Naive thymus-derived CD4-positive, alpha-beta T cell (primary cell): ENCODE measurements at regions of chr20 and their contacts with region 1.

Region 1: DNA sequence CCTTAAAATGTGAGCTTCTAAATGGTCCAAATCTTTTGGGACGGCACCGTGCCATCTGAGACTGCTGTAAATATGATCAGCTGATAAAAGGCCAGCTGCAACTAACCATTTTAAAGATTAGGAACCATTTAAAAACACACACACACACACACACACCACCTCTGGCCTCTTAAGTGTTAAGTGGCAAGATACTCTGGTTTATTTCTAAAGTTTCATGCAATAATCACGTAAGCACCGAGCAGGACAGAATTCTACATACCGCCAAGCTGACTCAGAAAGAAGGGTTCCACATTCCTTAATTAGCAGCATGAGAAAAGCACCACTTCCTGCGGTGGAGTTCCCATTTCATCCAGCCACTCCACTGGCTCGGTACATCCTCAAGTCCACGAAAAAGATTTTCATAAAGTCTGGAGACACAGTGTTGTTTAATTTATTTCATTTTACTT is 17.8 kb upstream of the ZNF217 start:
- DNase-seq: peak in 1 of 9 donors; percentile 15
- ATAC-seq: no peak
- H3K4me3 ChIP-seq: no peak overlapping the region
- H3K4me3 Mint-ChIP-seq: no peak overlapping the region
- H3K27ac ChIP-seq: peak overlapping the region; percentile 35
- H3K27ac Mint-ChIP-seq: peak overlapping the region in 8 of 9 donors; percentile 48 to 81 (median 76)
- H3K4me1 ChIP-seq: peaks cover 12 to 22% of the 10 kb centered on the region in 2 donors
- H3K4me1 Mint-ChIP-seq: peaks cover 10 to 46% (median 37%) of the 10 kb centered on the region in 7 donors
- H3K27me3 ChIP-seq: no peaks in the 10 kb centered on the region
- H3K27me3 Mint-ChIP-seq: no peaks in the 10 kb centered on the region

Region 2: DNA sequence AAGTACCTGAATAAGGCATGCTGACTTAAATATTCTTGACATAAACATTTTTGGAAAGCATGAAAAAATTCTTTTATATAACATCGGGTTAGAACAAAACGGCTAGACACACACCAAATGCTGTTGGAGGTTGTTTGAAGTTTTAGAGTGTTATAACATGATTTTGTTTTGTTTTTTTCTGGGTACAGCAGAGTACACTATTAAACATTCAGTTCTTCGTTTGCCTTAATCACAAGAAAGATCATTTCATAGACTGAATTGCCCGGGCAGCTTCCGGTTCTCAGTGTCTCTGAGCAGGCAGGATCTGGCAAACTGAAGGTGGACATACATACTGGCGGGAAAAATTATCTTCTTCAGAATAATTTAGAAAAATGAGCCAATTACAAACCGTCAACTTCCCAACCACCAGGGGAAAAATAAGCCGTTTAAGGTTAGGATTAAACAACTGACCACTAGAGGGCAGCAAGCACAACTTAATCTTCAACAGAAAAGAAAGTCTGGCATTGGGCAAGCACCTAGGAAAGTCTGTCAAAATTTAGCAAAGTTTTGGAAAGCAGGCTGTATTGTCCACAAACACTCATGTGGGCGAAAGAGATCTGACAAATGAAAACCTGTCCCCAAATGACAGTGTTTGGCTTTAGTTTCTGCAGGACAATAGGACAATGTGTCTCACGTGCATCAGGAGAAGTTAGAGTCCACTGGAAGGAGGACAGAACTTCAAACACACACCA is 32.8 kb before region 1 on chr20:
- CTCF ChIA-PET with region 1: interaction called, 7 read pairs
- POLR2A ChIA-PET with region 1: interaction called, 12 read pairs
- intact Hi-C with region 1: loop called (anchors 1 kb)
- DNase-seq: peak in 8 of 9 donors; percentile 44 to 85 (median 80)
- ATAC-seq: peak; percentile 85
- H3K4me3 ChIP-seq: peak overlapping the region; percentile 49
- H3K4me3 Mint-ChIP-seq: peak overlapping the region; percentile 79 to 98 (median 86)
- H3K27ac ChIP-seq: peak overlapping the region; percentile 70
- H3K27ac Mint-ChIP-seq: peak overlapping the region; percentile 83 to 98 (median 94)
- H3K4me1 ChIP-seq: peaks cover 53 to 60% of the 10 kb centered on the region in 2 donors
- H3K4me1 Mint-ChIP-seq: peaks cover 41 to 99% (median 91%) of the 10 kb centered on the region in 7 donors
- H3K27me3 ChIP-seq: no peaks in the 10 kb centered on the region
- H3K27me3 Mint-ChIP-seq: no peaks in the 10 kb centered on the region

Region 3: GRCh38 chr20:53623454-53624211 is 12.2 kb after region 1 on chr20:
- CTCF ChIA-PET with region 1: interaction called, 11 read pairs
- POLR2A ChIA-PET with region 1: interaction called, 74 read pairs
- intact Hi-C with region 1: loop called (anchors 1 kb)
- DNase-seq: peak in 4 of 9 donors; percentile 28 to 44 (median 31)
- ATAC-seq: peak; percentile 83
- H3K4me3 ChIP-seq: peak overlapping the region; percentile 56
- H3K4me3 Mint-ChIP-seq: peak overlapping the region; percentile 78 to 92 (median 87)
- H3K27ac ChIP-seq: peak overlapping the region; percentile 74
- H3K27ac Mint-ChIP-seq: peak overlapping the region; percentile 91 to 98 (median 97)
- H3K4me1 ChIP-seq: peaks cover 31 to 32% of the 10 kb centered on the region in 2 donors
- H3K4me1 Mint-ChIP-seq: peaks cover 17 to 53% (median 44%) of the 10 kb centered on the region in 7 donors
- H3K27me3 ChIP-seq: no peaks in the 10 kb centered on the region
- H3K27me3 Mint-ChIP-seq: no peaks in the 10 kb centered on the region

Region 4: GRCh38 chr20:53643031-53643832 is 31.8 kb after region 1 on chr20:
- CTCF ChIA-PET with region 1: interaction called, 5 read pairs
- POLR2A ChIA-PET with region 1: interaction called, 52 read pairs
- intact Hi-C with region 1: loop called (anchors 1 kb)
- DNase-seq: peak in 8 of 9 donors; percentile 61 to 81 (median 75)
- ATAC-seq: peak; percentile 98
- H3K4me3 ChIP-seq: peak overlapping the region; percentile 56
- H3K4me3 Mint-ChIP-seq: peak overlapping the region; percentile 73 to 92 (median 85)
- H3K27ac ChIP-seq: peak overlapping the region; percentile 77
- H3K27ac Mint-ChIP-seq: peak overlapping the region; percentile 90 to 100 (median 97)
- H3K4me1 ChIP-seq: peaks cover 13 to 45% of the 10 kb centered on the region in 2 donors
- H3K4me1 Mint-ChIP-seq: peaks cover 30 to 64% (median 52%) of the 10 kb centered on the region in 7 donors
- H3K27me3 ChIP-seq: no peaks in the 10 kb centered on the region
- H3K27me3 Mint-ChIP-seq: no peaks in the 10 kb centered on the region

Region 5: DNA sequence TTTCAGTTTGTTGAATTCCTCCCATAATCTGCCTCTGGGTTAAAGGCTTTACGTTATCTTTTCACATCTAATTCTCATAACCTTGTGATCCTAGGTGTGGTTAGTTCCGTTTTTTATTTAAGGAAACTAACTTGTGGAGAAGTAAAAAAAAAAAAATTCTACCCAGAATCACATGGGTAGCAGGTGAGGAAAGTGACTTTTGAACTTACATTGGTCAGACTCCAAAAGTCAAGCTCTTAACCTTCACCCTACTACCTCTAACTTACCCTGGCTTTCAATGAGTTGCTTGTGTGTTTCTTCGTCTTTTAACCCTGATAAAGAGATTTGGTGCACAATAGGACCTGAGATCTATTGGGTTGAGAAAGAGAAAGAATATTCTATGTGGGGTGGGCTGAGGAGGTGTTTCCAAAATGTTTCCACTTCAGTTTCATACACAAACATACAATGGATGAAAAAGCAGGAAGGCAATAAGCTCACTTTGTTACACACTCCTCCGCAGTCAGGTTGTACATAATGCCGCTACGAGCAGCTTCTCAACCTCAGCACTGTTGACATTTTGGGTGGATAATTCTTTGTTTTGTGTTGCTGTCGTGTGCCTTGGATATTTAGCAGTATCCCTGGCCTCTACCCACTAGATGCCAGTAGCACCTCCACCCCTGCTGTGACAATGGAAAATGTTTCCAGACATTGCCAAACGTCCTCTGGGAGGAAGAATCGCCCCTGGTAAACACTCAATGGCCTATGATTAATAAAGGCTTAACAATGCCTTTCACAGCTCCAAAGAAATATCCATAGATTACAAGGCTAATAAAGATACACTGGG is 175.2 kb after region 1 on chr20:
- CTCF ChIA-PET with region 1: no interaction called
- POLR2A ChIA-PET with region 1: no interaction called
- intact Hi-C with region 1: no loop called
- DNase-seq: no peak
- ATAC-seq: no peak
- H3K4me3 ChIP-seq: no peak overlapping the region
- H3K4me3 Mint-ChIP-seq: no peak overlapping the region
- H3K27ac ChIP-seq: no peak overlapping the region
- H3K27ac Mint-ChIP-seq: no peak overlapping the region
- H3K4me1 ChIP-seq: no peaks in the 10 kb centered on the region
- H3K4me1 Mint-ChIP-seq: peaks cover 2 to 22% (median 12%) of the 10 kb centered on the region in 7 donors
- H3K27me3 ChIP-seq: no peaks in the 10 kb centered on the region
- H3K27me3 Mint-ChIP-seq: no peaks in the 10 kb centered on the region

Region 6: GRCh38 chr20:53899351-53900167 is 288.1 kb after region 1 on chr20:
- CTCF ChIA-PET with region 1: interaction called, 3 read pairs
- POLR2A ChIA-PET with region 1: interaction called, 11 read pairs
- intact Hi-C with region 1: no loop called
- DNase-seq: peak in 8 of 9 donors; percentile 66 to 78 (median 74)
- ATAC-seq: peak; percentile 91
- H3K4me3 ChIP-seq: no peak overlapping the region
- H3K4me3 Mint-ChIP-seq: peak overlapping the region in 7 of 10 donors; percentile 28 to 72 (median 44)
- H3K27ac ChIP-seq: peak overlapping the region; percentile 2
- H3K27ac Mint-ChIP-seq: peak overlapping the region; percentile 61 to 92 (median 81)
- H3K4me1 ChIP-seq: peaks cover 13 to 18% of the 10 kb centered on the region in 2 donors
- H3K4me1 Mint-ChIP-seq: peaks cover 0 to 51% (median 40%) of the 10 kb centered on the region in 7 donors
- H3K27me3 ChIP-seq: no peaks in the 10 kb centered on the region
- H3K27me3 Mint-ChIP-seq: no peaks in the 10 kb centered on the region